Left ventricle myocardium inferior (tissue), 1 donor: ENCODE measurements at regions of chr1 and their contacts with region 1.

Region 1: GRCh38 chr1:225474986-225475820 is 47.4 kb upstream of the LBR start:
- DNase-seq: peak; percentile 59
- H3K4me3 ChIP-seq: peak overlapping the region; percentile 39
- H3K27ac ChIP-seq: no peak overlapping the region
- H3K4me1 ChIP-seq: peaks cover 4% of the 10 kb centered on the region
- H3K27me3 ChIP-seq: no peaks in the 10 kb centered on the region
- CTCF ChIP-seq: peak; percentile 100

Region 2: GRCh38 chr1:225250432-225250831 is 224.8 kb before region 1 on chr1:
- intact Hi-C with region 1: no loop called
- DNase-seq: no peak
- H3K4me3 ChIP-seq: no peak overlapping the region
- H3K27ac ChIP-seq: no peak overlapping the region
- H3K4me1 ChIP-seq: no peaks in the 10 kb centered on the region
- H3K27me3 ChIP-seq: no peaks in the 10 kb centered on the region
- CTCF ChIP-seq: no peak

Region 3: DNA sequence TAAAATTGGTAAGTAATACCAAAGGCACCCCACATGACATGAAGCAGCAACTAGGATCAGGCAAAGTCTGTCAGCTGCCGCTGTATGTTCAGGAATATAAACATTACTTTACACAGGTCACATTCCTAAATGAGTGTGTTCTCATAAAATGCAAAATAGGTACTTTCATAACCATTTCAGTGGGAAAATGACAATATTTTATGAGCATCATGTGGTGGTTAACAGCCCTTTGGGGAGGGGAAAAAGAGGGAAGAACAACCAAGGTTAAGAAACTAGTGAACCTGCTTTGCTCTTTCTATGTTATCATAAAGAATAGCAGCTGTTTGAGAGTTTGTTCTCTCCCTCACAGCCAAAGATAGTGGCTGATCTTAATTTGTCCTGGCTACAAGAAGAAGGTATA is 58.0 kb after region 1 on chr1:
- intact Hi-C with region 1: no loop called
- DNase-seq: no peak
- H3K4me3 ChIP-seq: no peak overlapping the region
- H3K27ac ChIP-seq: no peak overlapping the region
- H3K4me1 ChIP-seq: peaks cover 19% of the 10 kb centered on the region
- H3K27me3 ChIP-seq: no peaks in the 10 kb centered on the region
- CTCF ChIP-seq: no peak

Region 4: DNA sequence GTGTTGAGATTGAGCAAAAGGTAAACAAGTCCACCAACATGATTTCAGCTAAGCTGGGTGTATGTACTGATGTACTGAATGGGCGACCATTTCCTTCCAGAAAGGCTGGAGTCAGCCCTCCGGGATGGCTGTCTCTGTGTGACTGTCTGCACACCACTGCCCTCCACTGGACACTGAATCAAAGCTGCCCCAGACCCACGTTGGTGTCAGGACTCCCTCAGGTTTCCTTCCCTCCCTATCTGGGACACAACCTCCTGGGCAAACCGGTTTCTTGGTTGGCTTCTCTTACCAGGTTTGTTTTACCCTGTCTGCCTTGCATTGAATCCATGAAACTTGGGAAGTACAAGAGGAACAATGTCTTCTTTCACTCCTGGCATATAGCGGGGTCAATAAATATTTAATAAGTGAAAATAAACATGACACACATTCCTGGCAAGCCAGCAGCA is 297.1 kb after region 1 on chr1:
- intact Hi-C with region 1: loop called (anchors 5 kb)
- DNase-seq: peak; percentile 76
- H3K4me3 ChIP-seq: no peak overlapping the region
- H3K27ac ChIP-seq: peak overlapping the region; percentile 66
- H3K4me1 ChIP-seq: peaks cover 65% of the 10 kb centered on the region
- H3K27me3 ChIP-seq: no peaks in the 10 kb centered on the region
- CTCF ChIP-seq: peak; percentile 93

Region 5: GRCh38 chr1:225911191-225912130 is 436.3 kb after region 1 on chr1:
- intact Hi-C with region 1: loop called (anchors 5 kb)
- DNase-seq: peak; percentile 69
- H3K4me3 ChIP-seq: peak overlapping the region; percentile 43
- H3K27ac ChIP-seq: no peak overlapping the region
- H3K4me1 ChIP-seq: peaks cover 10% of the 10 kb centered on the region
- H3K27me3 ChIP-seq: no peaks in the 10 kb centered on the region
- CTCF ChIP-seq: peak; percentile 98